Activated CD4-positive, alpha-beta memory T cell treated with anti-CD3 and anti-CD28 coated beads for 36 hours (primary cell): ENCODE measurements at regions of chr7 and their contacts with region 1.

Region 1: GRCh38 chr7:150620617-150621371 is 11.4 kb downstream of the GIMAP6 start:
- DNase-seq: no peak
- H3K4me3 Mint-ChIP-seq: peak overlapping the region; percentile 29
- H3K27ac Mint-ChIP-seq: peak overlapping the region; percentile 95
- H3K4me1 Mint-ChIP-seq: peaks cover 56% of the 10 kb centered on the region
- H3K27me3 Mint-ChIP-seq: no peaks in the 10 kb centered on the region

Region 2: GRCh38 chr7:150567169-150567568 is 53.6 kb before region 1 on chr7 and contains the start of gene GIMAP4:
- CTCF ChIA-PET with region 1: interaction called, 3 read pairs
- POLR2A ChIA-PET with region 1: no interaction called
- intact Hi-C with region 1: loop called (anchors 2 kb)
- DNase-seq: peak; percentile 55
- H3K4me3 Mint-ChIP-seq: peak within 1 kb of the TSS; percentile 94
- H3K27ac Mint-ChIP-seq: peak within 1 kb of the TSS; percentile 98
- H3K4me1 Mint-ChIP-seq: peaks cover 65% of the 10 kb centered on the region
- H3K27me3 Mint-ChIP-seq: no peaks in the 10 kb centered on the region
- total RNA-seq, gene GIMAP4: 128 to 140 TPM

Region 3: GRCh38 chr7:150580638-150581394 is 40.0 kb before region 1 on chr7:
- CTCF ChIA-PET with region 1: no interaction called
- POLR2A ChIA-PET with region 1: no interaction called
- intact Hi-C with region 1: loop called (anchors 1 kb)
- DNase-seq: no peak
- H3K4me3 Mint-ChIP-seq: no peak overlapping the region
- H3K27ac Mint-ChIP-seq: peak overlapping the region; percentile 79
- H3K4me1 Mint-ChIP-seq: peaks cover 37% of the 10 kb centered on the region
- H3K27me3 Mint-ChIP-seq: no peaks in the 10 kb centered on the region

Region 4: DNA sequence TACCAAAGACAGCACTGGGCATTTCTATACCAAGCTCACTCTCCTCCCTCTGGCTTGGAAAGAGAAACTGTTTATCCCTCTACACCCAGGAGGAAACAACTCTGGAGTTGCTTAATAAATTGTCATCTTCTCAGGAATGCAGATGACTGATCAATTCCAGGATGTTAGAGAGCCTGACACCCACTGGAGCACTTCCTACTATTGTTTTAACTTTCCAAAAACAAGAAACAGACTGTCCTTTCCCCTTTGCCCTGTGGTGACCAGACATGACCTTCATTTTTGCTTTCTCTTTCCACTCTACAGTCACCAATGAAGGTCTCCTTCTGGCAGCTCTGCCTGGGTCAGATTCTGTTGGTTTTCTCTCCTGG is 34.0 kb before region 1 on chr7:
- CTCF ChIA-PET with region 1: no interaction called
- POLR2A ChIA-PET with region 1: no interaction called
- intact Hi-C with region 1: loop called (anchors 1 kb)
- DNase-seq: peak; percentile 48
- H3K4me3 Mint-ChIP-seq: peak overlapping the region; percentile 28
- H3K27ac Mint-ChIP-seq: peak overlapping the region; percentile 84
- H3K4me1 Mint-ChIP-seq: peaks cover 51% of the 10 kb centered on the region
- H3K27me3 Mint-ChIP-seq: no peaks in the 10 kb centered on the region

Region 5: GRCh38 chr7:150610233-150610632 is 10.6 kb before region 1 on chr7:
- CTCF ChIA-PET with region 1: no interaction called
- POLR2A ChIA-PET with region 1: interaction called, 7 read pairs
- intact Hi-C with region 1: loop called (anchors 1 kb)
- DNase-seq: no peak
- H3K4me3 Mint-ChIP-seq: no peak overlapping the region
- H3K27ac Mint-ChIP-seq: peak overlapping the region; percentile 91
- H3K4me1 Mint-ChIP-seq: peaks cover 66% of the 10 kb centered on the region
- H3K27me3 Mint-ChIP-seq: no peaks in the 10 kb centered on the region

Region 6: DNA sequence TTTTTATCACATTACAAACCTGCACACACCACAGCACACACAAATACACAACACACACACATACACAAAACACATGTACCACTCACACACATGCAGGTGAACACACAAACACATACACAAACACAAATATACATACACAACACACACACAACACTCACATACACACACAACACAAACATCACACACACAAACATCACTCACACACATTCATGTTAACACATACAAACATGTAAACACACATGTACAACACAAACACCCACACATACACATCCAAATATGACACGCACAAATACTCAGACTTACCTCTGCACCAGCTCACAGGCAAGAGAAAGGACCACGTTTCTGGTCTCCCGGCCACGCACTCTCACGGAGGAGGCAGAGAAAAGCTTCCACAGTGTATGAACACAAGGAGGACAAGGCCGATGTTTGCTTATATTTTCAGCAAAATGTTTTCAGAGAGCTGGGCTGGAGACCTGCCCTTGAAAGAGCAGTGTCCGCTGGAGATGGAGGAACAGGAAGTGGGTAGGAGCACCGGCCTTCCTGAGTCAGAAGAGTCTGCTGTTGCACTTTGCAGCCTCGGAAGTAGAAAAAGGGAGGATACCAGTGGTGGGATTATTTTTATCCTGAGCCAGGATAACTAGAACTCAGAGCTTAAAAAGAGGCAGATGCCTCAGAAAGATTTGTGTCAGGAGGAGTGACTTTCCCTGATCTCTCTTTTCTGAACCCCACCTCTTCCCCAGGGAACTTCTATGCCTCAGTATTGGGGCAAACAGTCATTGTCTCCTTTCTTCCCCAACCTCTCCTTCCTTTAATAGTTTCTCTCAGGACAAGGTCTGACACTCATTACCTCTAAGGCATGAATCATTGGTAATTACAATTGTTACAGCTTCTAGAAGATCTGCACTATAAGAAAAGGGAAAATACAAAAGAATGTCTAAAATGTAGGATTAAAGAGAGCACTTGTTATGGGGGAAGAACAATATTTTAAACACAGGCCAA is 11.4 kb after region 1 on chr7 and contains the start of gene GIMAP6:
- CTCF ChIA-PET with region 1: no interaction called
- POLR2A ChIA-PET with region 1: interaction called, 13 read pairs
- intact Hi-C with region 1: loop called (anchors 1 kb)
- DNase-seq: peak; percentile 62
- H3K4me3 Mint-ChIP-seq: peak within 1 kb of the TSS; percentile 93
- H3K27ac Mint-ChIP-seq: peak within 1 kb of the TSS; percentile 97
- H3K4me1 Mint-ChIP-seq: peaks cover 76% of the 10 kb centered on the region
- H3K27me3 Mint-ChIP-seq: no peaks in the 10 kb centered on the region
- total RNA-seq, gene GIMAP6: 28.9 to 30.2 TPM

Region 7: GRCh38 chr7:150657526-150657925 is 36.7 kb after region 1 on chr7:
- CTCF ChIA-PET with region 1: no interaction called
- POLR2A ChIA-PET with region 1: no interaction called
- intact Hi-C with region 1: no loop called
- DNase-seq: no peak
- H3K4me3 Mint-ChIP-seq: no peak overlapping the region
- H3K27ac Mint-ChIP-seq: peak overlapping the region; percentile 68
- H3K4me1 Mint-ChIP-seq: peaks cover 32% of the 10 kb centered on the region
- H3K27me3 Mint-ChIP-seq: no peaks in the 10 kb centered on the region

Region 8: DNA sequence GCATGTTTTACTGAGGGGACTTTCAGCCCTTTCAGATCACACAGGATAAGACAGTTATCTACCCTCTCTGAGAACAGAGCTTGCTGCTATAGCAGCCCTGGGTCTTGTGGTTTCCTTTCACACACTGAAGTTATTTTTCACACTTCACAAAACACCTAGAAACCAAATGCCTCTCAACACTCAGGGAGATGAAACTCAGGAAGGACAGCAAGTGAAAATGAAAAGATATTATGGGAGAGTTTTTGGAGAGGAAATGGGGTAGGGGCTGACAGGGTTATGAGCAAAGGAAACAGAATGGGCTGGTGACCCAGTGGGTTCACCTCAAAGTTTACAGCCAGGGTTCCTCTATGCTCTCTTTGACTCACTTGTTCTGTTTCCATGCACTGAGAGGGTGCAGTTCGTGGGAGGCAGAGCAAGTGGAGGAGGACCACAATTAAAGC is 47.7 kb after region 1 on chr7:
- CTCF ChIA-PET with region 1: no interaction called
- POLR2A ChIA-PET with region 1: no interaction called
- intact Hi-C with region 1: loop called (anchors 1 kb)
- DNase-seq: peak; percentile 81
- H3K4me3 Mint-ChIP-seq: peak overlapping the region; percentile 18
- H3K27ac Mint-ChIP-seq: peak overlapping the region; percentile 98
- H3K4me1 Mint-ChIP-seq: peaks cover 82% of the 10 kb centered on the region
- H3K27me3 Mint-ChIP-seq: no peaks in the 10 kb centered on the region